CD4-positive, alpha-beta T cell (primary cell): ENCODE measurements at regions of chr4 and their contacts with region 1.

Region 1: GRCh38 chr4:185597532-185598188 is 62.4 kb upstream of the PDLIM3 start:
- DNase-seq: peak; percentile 50 to 82 (median 62)
- ATAC-seq: peak; percentile 74
- H3K4me3 ChIP-seq: no peak overlapping the region
- H3K4me3 Mint-ChIP-seq: no peak overlapping the region
- H3K27ac ChIP-seq: no peak overlapping the region
- H3K27ac Mint-ChIP-seq: no peak overlapping the region
- H3K4me1 ChIP-seq: no peaks in the 10 kb centered on the region
- H3K4me1 Mint-ChIP-seq: no peaks in the 10 kb centered on the region
- H3K27me3 ChIP-seq: peaks cover 0 to 4% of the 10 kb centered on the region in 2 experiments
- H3K27me3 Mint-ChIP-seq: peaks cover 33% of the 10 kb centered on the region
- CTCF ChIP-seq: peak; percentile 99

Region 2: GRCh38 chr4:185183619-185184281 is 413.9 kb before region 1 on chr4:
- CTCF ChIA-PET with region 1: no interaction called
- POLR2A ChIA-PET with region 1: no interaction called
- intact Hi-C with region 1: loop called in 1 of 2 experiments (anchors 10 kb)
- DNase-seq: peak; percentile 54 to 91 (median 70)
- ATAC-seq: peak; percentile 67
- H3K4me3 ChIP-seq: no peak overlapping the region
- H3K4me3 Mint-ChIP-seq: no peak overlapping the region
- H3K27ac ChIP-seq: no peak overlapping the region
- H3K27ac Mint-ChIP-seq: no peak overlapping the region
- H3K4me1 ChIP-seq: peaks cover 13% of the 10 kb centered on the region
- H3K4me1 Mint-ChIP-seq: peaks cover 57% of the 10 kb centered on the region
- H3K27me3 ChIP-seq: no peaks in the 10 kb centered on the region
- H3K27me3 Mint-ChIP-seq: no peaks in the 10 kb centered on the region
- CTCF ChIP-seq: peak; percentile 93

Region 3: DNA sequence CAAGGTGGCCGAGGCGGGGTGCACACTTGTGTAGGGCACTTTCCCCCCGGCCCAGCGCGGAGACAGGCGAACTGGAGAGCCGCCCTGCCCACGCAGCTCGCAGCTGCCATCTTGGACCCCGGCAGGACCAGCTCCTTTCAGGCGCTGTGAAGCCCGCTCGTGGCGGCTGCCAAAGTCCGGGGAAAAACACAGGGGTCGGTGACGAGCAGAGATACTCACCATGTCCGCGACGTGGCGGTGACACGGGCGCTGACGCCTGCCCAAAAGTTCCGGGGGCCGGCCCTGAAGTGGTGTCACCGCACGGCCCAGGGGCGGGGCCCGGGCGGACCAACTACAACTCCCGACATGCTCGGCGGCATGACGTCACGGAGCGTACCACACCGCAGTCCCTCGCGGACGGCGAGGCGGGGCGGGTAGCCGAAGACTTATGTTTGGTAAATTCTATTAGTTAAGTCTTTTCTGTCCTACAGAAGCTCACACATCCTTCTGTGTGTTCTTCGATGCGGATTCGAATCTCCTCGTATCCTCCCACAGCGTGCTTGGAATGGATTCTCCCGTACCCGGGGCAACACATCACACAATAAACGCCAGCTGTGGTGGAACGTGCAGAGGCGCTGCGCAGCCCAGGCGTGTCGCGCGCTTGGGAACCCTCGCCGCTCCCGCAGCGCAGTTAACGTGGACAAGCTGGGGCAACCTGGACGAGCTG is 171.9 kb before region 1 on chr4 and contains the start of gene UFSP2:
- CTCF ChIA-PET with region 1: interaction called, 7 read pairs
- POLR2A ChIA-PET with region 1: no interaction called
- intact Hi-C with region 1: loop called in 1 of 2 experiments (anchors 10 kb)
- DNase-seq: peak; percentile 78 to 97 (median 88)
- ATAC-seq: peak; percentile 85
- H3K4me3 ChIP-seq: peak within 1 kb of the TSS; percentile 99
- H3K4me3 Mint-ChIP-seq: peak within 1 kb of the TSS; percentile 94
- H3K27ac ChIP-seq: peak within 1 kb of the TSS; percentile 88 to 99
- H3K27ac Mint-ChIP-seq: peak within 1 kb of the TSS; percentile 91
- H3K4me1 ChIP-seq: peaks cover 18% of the 10 kb centered on the region
- H3K4me1 Mint-ChIP-seq: peaks cover 31% of the 10 kb centered on the region
- H3K27me3 ChIP-seq: no peaks in the 10 kb centered on the region
- H3K27me3 Mint-ChIP-seq: peaks cover 6% of the 10 kb centered on the region
- CTCF ChIP-seq: no peak
- total RNA-seq, gene UFSP2: 14.5 to 16.6 TPM

Region 4: DNA sequence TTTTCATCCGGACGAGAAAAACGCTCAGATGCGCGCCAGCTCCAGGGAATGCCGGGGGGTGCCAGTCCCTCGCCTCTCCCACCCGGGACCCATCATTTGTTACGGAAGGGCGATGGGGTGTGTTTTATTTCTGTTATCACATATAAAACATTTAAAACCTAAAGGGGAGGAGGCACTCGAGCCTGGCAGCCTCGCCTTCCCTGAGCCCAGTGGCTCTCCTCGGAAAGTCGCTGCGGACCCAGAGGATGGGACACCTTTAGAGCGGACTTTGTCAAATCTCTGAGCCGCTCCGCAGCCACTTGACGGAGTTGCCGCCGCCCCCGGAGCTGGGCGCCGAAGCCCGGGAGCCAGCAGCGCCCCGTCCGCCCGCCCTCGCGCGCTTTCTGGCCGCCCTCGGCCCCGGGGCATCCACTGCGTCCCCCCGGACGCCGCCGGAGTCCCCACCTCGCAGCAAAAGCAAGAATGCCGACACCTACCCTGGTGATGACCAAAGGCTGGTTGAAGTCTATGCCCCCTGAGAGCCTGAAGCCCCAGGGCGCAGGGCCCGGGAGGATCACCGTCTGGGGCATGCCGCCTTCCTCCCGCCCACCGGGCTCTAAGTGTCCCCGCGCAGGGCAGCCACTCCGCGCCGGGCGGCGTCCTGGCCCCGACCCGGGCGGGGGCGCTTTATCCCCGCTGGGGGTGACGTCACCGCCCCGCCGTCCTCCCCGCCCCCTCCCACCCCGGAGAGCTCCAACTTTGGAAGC is 62.6 kb before region 1 on chr4 and contains the start of gene PDLIM3:
- CTCF ChIA-PET with region 1: no interaction called
- POLR2A ChIA-PET with region 1: no interaction called
- intact Hi-C with region 1: loop called in 1 of 2 experiments (anchors 5 kb)
- DNase-seq: peak in 1 of 14 experiments; percentile 14
- ATAC-seq: no peak
- H3K4me3 ChIP-seq: no peak within 1 kb of the TSS
- H3K4me3 Mint-ChIP-seq: peak within 1 kb of the TSS; percentile 66
- H3K27ac ChIP-seq: no peak within 1 kb of the TSS
- H3K27ac Mint-ChIP-seq: no peak within 1 kb of the TSS
- H3K4me1 ChIP-seq: peaks cover 3% of the 10 kb centered on the region
- H3K4me1 Mint-ChIP-seq: no peaks in the 10 kb centered on the region
- H3K27me3 ChIP-seq: peaks cover 34 to 71% of the 10 kb centered on the region in 2 experiments
- H3K27me3 Mint-ChIP-seq: peaks cover 49% of the 10 kb centered on the region
- CTCF ChIP-seq: no peak
- total RNA-seq, gene PDLIM3: not detected

Region 5: DNA sequence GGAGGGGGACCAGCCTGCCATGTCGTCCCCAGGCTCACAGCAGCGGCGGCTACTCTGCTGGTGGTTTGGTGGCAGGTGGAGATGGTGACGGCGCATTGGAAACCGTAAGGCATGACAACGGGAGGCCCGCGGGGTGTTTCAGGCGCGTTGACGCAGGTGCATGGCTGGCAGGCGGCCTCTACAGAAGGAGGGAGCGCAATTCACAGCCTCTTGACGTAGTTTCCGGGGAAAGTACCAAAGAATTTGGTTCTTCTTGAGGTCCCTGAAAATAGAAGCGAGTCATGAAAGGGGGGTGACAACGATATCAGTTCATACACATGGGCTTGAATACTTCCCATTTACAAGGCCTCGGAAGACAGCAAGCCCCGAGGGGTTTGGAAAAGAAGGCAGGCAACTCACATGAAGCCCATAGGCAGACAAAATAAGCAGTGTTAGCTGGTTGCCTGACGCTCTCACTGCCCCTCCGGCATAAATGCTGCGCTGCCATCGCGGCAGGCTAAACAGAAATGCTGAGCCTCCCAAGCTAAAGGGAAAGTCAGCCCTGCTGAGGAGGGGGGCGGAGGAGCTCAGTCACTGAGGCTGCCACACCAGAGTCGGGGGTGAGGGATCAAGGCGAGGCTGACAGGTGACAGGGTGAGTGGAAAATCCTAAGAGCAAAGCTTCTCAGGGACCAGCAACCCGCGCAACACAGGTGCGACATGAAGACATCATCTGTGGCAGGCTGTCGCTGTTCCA is 10.1 kb before region 1 on chr4:
- CTCF ChIA-PET with region 1: interaction called, 12 read pairs
- POLR2A ChIA-PET with region 1: no interaction called
- intact Hi-C with region 1: no loop called
- DNase-seq: peak; percentile 4 to 88 (median 50)
- ATAC-seq: peak; percentile 91
- H3K4me3 ChIP-seq: peak overlapping the region; percentile 30
- H3K4me3 Mint-ChIP-seq: peak overlapping the region; percentile 39
- H3K27ac ChIP-seq: no peak overlapping the region
- H3K27ac Mint-ChIP-seq: peak overlapping the region; percentile 73
- H3K4me1 ChIP-seq: peaks cover 11% of the 10 kb centered on the region
- H3K4me1 Mint-ChIP-seq: peaks cover 13% of the 10 kb centered on the region
- H3K27me3 ChIP-seq: peaks cover 20 to 48% of the 10 kb centered on the region in 2 experiments
- H3K27me3 Mint-ChIP-seq: peaks cover 71% of the 10 kb centered on the region
- CTCF ChIP-seq: no peak

Region 6: DNA sequence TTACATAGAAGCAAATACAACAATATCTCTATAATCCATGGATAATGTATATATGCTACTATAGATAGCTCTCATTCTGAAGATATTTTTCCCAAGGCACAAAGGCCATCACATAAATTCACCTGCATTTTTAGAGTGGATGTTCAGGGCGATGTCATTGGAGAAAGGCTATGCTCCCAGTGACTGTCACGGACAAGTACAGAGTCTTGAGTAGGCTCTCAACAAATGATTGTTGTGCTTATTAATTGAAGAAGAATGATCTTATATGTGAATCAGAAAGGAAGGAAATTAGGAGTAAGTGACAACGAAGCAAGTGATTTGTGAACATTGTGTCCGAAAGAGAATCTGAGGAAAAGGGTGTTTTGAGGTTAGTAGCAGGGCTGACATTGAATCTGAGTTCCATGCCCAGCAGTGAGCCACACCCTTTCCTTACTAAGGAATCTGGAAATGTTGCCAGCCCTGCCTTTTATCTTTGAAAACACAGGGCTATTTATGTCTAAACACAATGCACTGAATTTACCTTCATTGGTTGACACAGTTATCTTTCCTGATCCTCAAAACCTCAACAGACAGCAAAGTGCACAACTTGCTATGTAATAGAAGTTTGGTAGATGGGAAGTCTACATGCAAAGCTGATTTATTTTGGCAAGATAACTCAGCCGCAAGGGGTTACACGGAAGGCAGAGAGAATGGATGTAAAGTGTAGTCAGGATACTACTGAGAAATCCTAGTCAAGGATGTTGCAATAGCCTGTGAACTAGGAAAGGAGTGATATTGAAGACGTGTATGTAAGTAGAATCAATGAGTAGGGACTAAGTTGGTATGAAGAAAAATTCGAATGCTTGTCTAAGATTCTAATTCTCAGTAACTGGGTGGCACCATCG is 163.9 kb after region 1 on chr4:
- CTCF ChIA-PET with region 1: no interaction called
- POLR2A ChIA-PET with region 1: no interaction called
- intact Hi-C with region 1: no loop called
- DNase-seq: no peak
- ATAC-seq: no peak
- H3K4me3 ChIP-seq: no peak overlapping the region
- H3K4me3 Mint-ChIP-seq: no peak overlapping the region
- H3K27ac ChIP-seq: no peak overlapping the region
- H3K27ac Mint-ChIP-seq: no peak overlapping the region
- H3K4me1 ChIP-seq: no peaks in the 10 kb centered on the region
- H3K4me1 Mint-ChIP-seq: no peaks in the 10 kb centered on the region
- H3K27me3 ChIP-seq: no peaks in the 10 kb centered on the region
- H3K27me3 Mint-ChIP-seq: peaks cover 13% of the 10 kb centered on the region
- CTCF ChIP-seq: no peak